MCF 10A (cell line): ENCODE measurements at regions of chr11 and their contacts with region 1.

Region 1: DNA sequence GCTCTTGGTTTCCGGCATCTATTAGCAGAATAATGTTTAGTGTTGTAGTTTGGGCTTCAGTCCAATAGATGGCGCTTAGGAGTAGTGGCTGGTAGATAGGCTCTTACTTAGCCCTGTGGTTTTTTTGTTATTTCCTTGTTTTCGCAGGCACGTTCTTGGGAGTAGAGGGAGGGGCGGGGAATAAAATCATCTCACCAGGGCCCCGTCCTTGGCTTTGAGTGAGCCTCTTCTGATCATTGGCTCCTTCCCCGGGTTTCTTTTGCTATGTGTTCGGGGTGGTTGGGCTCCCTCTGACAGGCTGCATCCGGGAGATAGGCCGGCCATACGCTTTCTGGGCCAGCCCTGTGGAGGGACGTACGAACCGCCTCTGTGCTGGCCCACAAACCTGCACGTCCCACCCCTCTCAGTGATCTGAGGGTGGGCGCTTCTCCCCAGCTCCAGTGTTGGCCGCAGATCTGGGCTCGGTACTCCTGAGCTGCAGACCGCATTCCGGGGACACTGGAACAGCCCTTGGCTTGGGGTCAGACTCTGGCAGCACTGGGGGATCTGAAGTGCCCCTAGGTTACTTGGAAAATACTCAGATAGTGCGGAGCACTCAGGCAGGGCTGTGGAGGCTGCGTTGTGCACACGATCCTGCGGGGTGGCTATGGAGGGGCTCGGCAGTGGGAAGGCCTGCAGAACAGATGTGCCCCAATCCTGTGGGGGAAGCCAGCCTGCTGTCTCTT is 217.0 kb downstream of the DYNC2H1 start:
- DNase-seq: peak; percentile 75
- H3K4me3 Mint-ChIP-seq: no peak overlapping the region
- H3K27ac Mint-ChIP-seq: peak overlapping the region; percentile 55
- H3K4me1 Mint-ChIP-seq: peaks cover 7% of the 10 kb centered on the region
- H3K27me3 Mint-ChIP-seq: no peaks in the 10 kb centered on the region
- CTCF ChIP-seq: peak; percentile 82

Region 2: DNA sequence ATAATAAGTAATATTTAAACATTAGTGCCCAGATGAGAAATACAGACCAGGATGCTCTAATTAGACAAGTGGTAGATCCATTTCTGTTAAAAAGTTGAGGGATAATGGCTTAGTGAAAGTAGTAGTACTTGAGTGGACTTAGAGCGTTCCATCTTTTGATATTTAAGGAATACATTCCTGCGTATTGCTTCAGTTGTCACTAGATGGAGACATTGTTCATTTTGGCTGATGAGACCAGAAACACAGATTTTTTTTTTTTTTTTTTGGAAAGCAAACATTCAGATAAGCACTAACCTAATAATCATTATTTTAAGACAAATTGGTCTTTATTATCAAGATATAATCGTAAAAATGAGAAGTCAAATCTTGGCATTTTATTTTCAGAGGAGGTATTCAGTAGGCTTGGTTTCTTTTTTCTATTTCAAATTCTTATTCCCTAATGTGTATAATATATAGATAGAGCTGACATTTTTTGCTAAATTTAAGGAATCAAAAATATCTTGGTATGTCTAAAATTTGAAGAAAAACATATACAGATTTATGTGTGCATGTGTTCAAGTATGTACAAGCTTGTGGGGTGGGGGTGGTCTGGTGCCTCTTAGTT is 124.1 kb before region 1 on chr11:
- CTCF ChIA-PET with region 1: interaction called, 4 read pairs
- POLR2A ChIA-PET with region 1: no interaction called
- intact Hi-C with region 1: loop called (anchors 5 kb)
- DNase-seq: peak; percentile 54
- H3K4me3 Mint-ChIP-seq: no peak overlapping the region
- H3K27ac Mint-ChIP-seq: no peak overlapping the region
- H3K4me1 Mint-ChIP-seq: no peaks in the 10 kb centered on the region
- H3K27me3 Mint-ChIP-seq: no peaks in the 10 kb centered on the region
- CTCF ChIP-seq: peak; percentile 37

Region 3: DNA sequence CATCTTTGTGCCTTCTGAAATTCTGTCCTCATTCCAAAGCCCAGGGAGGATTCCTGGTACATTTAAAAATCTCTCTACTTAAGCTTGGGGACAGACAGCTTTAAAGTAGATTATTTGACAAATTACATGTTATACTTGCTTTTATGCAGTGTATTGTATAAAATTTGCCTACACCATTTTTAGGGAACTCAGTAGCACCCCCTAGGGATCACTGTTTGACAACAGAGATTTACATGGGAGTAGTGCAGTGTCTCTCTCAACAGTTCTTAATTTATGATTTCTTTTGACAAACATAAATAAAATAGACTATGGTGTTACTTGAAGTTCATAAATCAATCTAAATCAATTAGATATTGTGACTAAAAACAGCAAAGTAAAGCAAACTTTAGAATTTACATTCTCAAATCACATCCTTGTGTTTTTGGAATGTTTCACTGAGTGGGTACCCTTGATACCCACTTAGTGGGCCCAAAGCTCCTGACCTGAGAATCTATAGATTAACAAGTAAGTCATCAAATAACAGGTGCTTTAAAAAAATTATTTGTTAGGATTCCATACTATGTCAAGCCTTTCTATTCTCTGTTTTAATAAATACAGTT is 211.8 kb after region 1 on chr11:
- CTCF ChIA-PET with region 1: interaction called, 10 read pairs
- POLR2A ChIA-PET with region 1: no interaction called
- intact Hi-C with region 1: loop called (anchors 1 kb)
- DNase-seq: peak; percentile 59
- H3K4me3 Mint-ChIP-seq: no peak overlapping the region
- H3K27ac Mint-ChIP-seq: no peak overlapping the region
- H3K4me1 Mint-ChIP-seq: peaks cover 13% of the 10 kb centered on the region
- H3K27me3 Mint-ChIP-seq: no peaks in the 10 kb centered on the region
- CTCF ChIP-seq: peak; percentile 52

Region 4: GRCh38 chr11:103594283-103594682 is 268.1 kb after region 1 on chr11:
- CTCF ChIA-PET with region 1: interaction called, 63 read pairs
- POLR2A ChIA-PET with region 1: no interaction called
- intact Hi-C with region 1: no loop called
- DNase-seq: peak; percentile 1
- H3K4me3 Mint-ChIP-seq: no peak overlapping the region
- H3K27ac Mint-ChIP-seq: no peak overlapping the region
- H3K4me1 Mint-ChIP-seq: peaks cover 6% of the 10 kb centered on the region
- H3K27me3 Mint-ChIP-seq: no peaks in the 10 kb centered on the region
- CTCF ChIP-seq: no peak